PC-3 (cell line): ENCODE measurements at regions of chr22 and their contacts with region 1.

Region 1: DNA sequence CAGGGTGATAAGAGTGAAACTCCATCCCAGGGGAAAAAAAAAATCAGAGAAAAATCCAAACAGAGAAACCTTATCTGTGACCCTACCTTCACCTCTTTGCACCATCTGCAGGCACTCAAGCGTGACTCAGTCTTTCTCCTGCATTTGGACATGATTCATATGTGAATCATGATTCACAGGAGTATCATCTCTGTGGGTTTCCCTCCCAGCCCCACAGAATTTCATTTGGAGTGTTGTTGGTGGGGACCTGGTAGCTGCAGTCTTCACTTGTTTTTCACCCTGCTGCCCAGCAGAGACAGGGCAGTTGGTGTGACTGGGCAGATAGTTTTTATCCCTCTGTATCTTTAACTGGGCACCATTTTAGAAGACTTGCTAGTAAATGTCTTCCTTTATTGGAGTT is 75.7 kb downstream of the DEPDC5 start:
- DNase-seq: peak; percentile 89
- ATAC-seq: peak; percentile 93
- H3K4me3 ChIP-seq: peak overlapping the region; percentile 31
- H3K27ac ChIP-seq: peak overlapping the region; percentile 88
- H3K4me1 ChIP-seq: peaks cover 23% of the 10 kb centered on the region
- H3K27me3 ChIP-seq: no peaks in the 10 kb centered on the region
- CTCF ChIP-seq: no peak

Region 2: GRCh38 chr22:31332886-31333285 is 496.6 kb before region 1 on chr22:
- CTCF ChIA-PET with region 1: interaction called, 11 read pairs
- POLR2A ChIA-PET with region 1: no interaction called
- intact Hi-C with region 1: no loop called
- DNase-seq: peak; percentile 30
- ATAC-seq: no peak
- H3K4me3 ChIP-seq: no peak overlapping the region
- H3K27ac ChIP-seq: no peak overlapping the region
- H3K4me1 ChIP-seq: peaks cover 7% of the 10 kb centered on the region
- H3K27me3 ChIP-seq: no peaks in the 10 kb centered on the region
- CTCF ChIP-seq: no peak

Region 3: GRCh38 chr22:31680861-31681341 is 148.6 kb before region 1 on chr22:
- CTCF ChIA-PET with region 1: no interaction called
- POLR2A ChIA-PET with region 1: no interaction called
- intact Hi-C with region 1: no loop called
- DNase-seq: peak; percentile 48
- ATAC-seq: peak; percentile 43
- H3K4me3 ChIP-seq: no peak overlapping the region
- H3K27ac ChIP-seq: no peak overlapping the region
- H3K4me1 ChIP-seq: peaks cover 11% of the 10 kb centered on the region
- H3K27me3 ChIP-seq: no peaks in the 10 kb centered on the region
- CTCF ChIP-seq: no peak

Region 4: GRCh38 chr22:31707519-31707918 is 122.0 kb before region 1 on chr22:
- CTCF ChIA-PET with region 1: no interaction called
- POLR2A ChIA-PET with region 1: no interaction called
- intact Hi-C with region 1: no loop called
- DNase-seq: no peak
- ATAC-seq: no peak
- H3K4me3 ChIP-seq: no peak overlapping the region
- H3K27ac ChIP-seq: no peak overlapping the region
- H3K4me1 ChIP-seq: no peaks in the 10 kb centered on the region
- H3K27me3 ChIP-seq: no peaks in the 10 kb centered on the region
- CTCF ChIP-seq: no peak

Region 5: GRCh38 chr22:31768422-31769059 is 61.0 kb before region 1 on chr22:
- CTCF ChIA-PET with region 1: no interaction called
- POLR2A ChIA-PET with region 1: no interaction called
- intact Hi-C with region 1: loop called (anchors 10 kb)
- DNase-seq: peak; percentile 18
- ATAC-seq: no peak; the same call in 1 of the 2 replicates
- H3K4me3 ChIP-seq: no peak overlapping the region
- H3K27ac ChIP-seq: no peak overlapping the region
- H3K4me1 ChIP-seq: no peaks in the 10 kb centered on the region
- H3K27me3 ChIP-seq: no peaks in the 10 kb centered on the region
- CTCF ChIP-seq: no peak

Region 6: GRCh38 chr22:31977141-31977841 is 147.8 kb after region 1 on chr22:
- CTCF ChIA-PET with region 1: no interaction called
- POLR2A ChIA-PET with region 1: no interaction called
- intact Hi-C with region 1: no loop called
- DNase-seq: peak; percentile 80
- ATAC-seq: peak; percentile 97
- H3K4me3 ChIP-seq: no peak overlapping the region
- H3K27ac ChIP-seq: no peak overlapping the region
- H3K4me1 ChIP-seq: no peaks in the 10 kb centered on the region
- H3K27me3 ChIP-seq: no peaks in the 10 kb centered on the region
- CTCF ChIP-seq: peak; percentile 80